AG04450 (cell line): ENCODE measurements at regions of chr6 and their contacts with region 1.

Region 1: DNA sequence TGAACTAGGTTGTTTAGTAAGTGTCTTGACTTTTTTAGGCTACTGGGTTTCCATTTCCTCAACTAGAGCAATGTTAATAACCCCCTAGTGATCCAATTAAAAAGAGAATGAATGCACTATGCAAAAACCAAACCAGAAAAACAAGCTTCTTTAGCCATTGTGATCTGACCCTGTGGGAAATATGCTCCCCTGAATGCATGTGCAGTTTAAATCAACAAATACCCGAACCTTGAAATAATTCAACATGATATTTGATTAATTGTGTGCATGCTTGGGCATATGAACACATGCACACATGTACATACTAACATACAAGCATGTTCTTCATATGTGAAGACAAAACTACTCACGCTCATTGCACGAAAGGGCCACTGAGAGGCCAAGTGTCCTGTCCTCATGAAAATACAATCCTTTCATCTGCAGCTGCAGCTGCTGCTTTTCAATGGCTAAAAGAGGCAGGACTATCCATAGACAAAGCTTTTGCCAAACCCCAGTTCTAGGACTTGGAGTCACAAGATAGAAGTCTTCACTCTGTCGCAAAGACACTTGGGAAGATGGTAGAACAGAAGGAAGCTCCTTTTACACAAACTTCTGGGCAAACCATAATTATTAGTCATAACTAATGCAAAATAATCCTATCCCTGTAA is 207.1 kb upstream of the POU3F2 start:
- DNase-seq: no peak
- H3K4me3 ChIP-seq: no peak overlapping the region
- H3K27ac ChIP-seq: no peak overlapping the region
- H3K27me3 ChIP-seq: no peaks in the 10 kb centered on the region
- CTCF ChIP-seq: no peak

Region 2: GRCh38 chr6:98286620-98287019 is 340.6 kb before region 1 on chr6:
- CTCF ChIA-PET with region 1: no interaction called
- POLR2A ChIA-PET with region 1: no interaction called
- DNase-seq: no peak
- H3K4me3 ChIP-seq: no peak overlapping the region
- H3K27ac ChIP-seq: no peak overlapping the region
- H3K27me3 ChIP-seq: no peaks in the 10 kb centered on the region
- CTCF ChIP-seq: no peak

Region 3: DNA sequence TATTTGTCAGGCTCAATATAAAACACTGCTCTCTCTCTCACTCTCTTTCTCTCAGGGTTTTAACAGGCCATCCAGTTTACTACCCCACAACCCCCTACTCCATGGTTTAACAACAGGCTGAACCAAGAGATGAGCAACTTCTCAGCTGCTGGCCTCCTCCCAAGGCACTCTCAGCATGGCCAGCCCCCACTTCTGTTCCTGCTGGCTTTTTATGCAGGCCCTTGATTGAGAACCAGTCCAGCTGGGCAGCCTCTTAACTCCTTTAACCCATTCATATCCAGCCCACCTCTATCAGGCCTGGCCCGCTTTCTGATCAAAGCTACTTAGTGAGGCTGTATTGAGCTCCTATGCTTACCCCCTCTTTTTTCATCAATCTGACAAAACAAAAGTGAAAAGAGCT is 139.6 kb before region 1 on chr6:
- CTCF ChIA-PET with region 1: no interaction called
- POLR2A ChIA-PET with region 1: no interaction called
- DNase-seq: no peak
- H3K4me3 ChIP-seq: no peak overlapping the region
- H3K27ac ChIP-seq: no peak overlapping the region
- H3K27me3 ChIP-seq: no peaks in the 10 kb centered on the region
- CTCF ChIP-seq: no peak

Region 4: GRCh38 chr6:98834060-98835031 is 207.1 kb after region 1 on chr6 and contains the start of gene POU3F2:
- CTCF ChIA-PET with region 1: interaction called, 12 read pairs
- POLR2A ChIA-PET with region 1: no interaction called
- DNase-seq: peak; percentile 34
- H3K4me3 ChIP-seq: peak within 1 kb of the TSS; percentile 55
- H3K27ac ChIP-seq: no peak within 1 kb of the TSS
- H3K27me3 ChIP-seq: peaks cover 78% of the 10 kb centered on the region
- CTCF ChIP-seq: no peak
- polyA plus RNA-seq, gene POU3F2: not detected in 2 replicates